ENCODE measurements at regions of chr14 and their contacts with region 1.

Region 1: GRCh38 chr14:39266871-39267591 is 33.3 kb downstream of the MIA2 start:
- DNase-seq: peak; percentile 86
- H3K4me3 ChIP-seq: peak overlapping the region; percentile 50 to 92 (median 84)
- H3K27ac ChIP-seq: peak overlapping the region; percentile 92
- H3K4me1 ChIP-seq: peaks cover 18% of the 10 kb centered on the region
- H3K27me3 ChIP-seq: no peaks in the 10 kb centered on the region
- CTCF ChIP-seq: no peak
- POLR2A ChIP-seq: peak; percentile 71

Region 2: GRCh38 chr14:39114073-39114838 is 152.8 kb before region 1 on chr14 and contains the start of gene GEMIN2:
- CTCF ChIA-PET with region 1: interaction called, 3 read pairs
- POLR2A ChIA-PET with region 1: no interaction called
- dilution Hi-C with region 1: no loop called
- intact Hi-C with region 1: loop called (anchors 5 kb)
- DNase-seq: peak; percentile 97
- H3K4me3 ChIP-seq: peak within 1 kb of the TSS; percentile 48 to 92 (median 61)
- H3K27ac ChIP-seq: peak within 1 kb of the TSS; percentile 7
- H3K4me1 ChIP-seq: peaks cover 11% of the 10 kb centered on the region
- H3K27me3 ChIP-seq: no peaks in the 10 kb centered on the region
- CTCF ChIP-seq: no peak
- POLR2A ChIP-seq: peak; percentile 83
- total RNA-seq, gene GEMIN2: 19.5 and 20.0 TPM in 2 replicates

Region 3: GRCh38 chr14:39138440-39138839 is 128.6 kb before region 1 on chr14:
- CTCF ChIA-PET with region 1: no interaction called
- POLR2A ChIA-PET with region 1: no interaction called
- dilution Hi-C with region 1: no loop called
- intact Hi-C with region 1: no loop called
- DNase-seq: no peak
- H3K4me3 ChIP-seq: no peak overlapping the region
- H3K27ac ChIP-seq: no peak overlapping the region
- H3K4me1 ChIP-seq: no peaks in the 10 kb centered on the region
- H3K27me3 ChIP-seq: no peaks in the 10 kb centered on the region
- CTCF ChIP-seq: no peak
- POLR2A ChIP-seq: no peak

Region 4: DNA sequence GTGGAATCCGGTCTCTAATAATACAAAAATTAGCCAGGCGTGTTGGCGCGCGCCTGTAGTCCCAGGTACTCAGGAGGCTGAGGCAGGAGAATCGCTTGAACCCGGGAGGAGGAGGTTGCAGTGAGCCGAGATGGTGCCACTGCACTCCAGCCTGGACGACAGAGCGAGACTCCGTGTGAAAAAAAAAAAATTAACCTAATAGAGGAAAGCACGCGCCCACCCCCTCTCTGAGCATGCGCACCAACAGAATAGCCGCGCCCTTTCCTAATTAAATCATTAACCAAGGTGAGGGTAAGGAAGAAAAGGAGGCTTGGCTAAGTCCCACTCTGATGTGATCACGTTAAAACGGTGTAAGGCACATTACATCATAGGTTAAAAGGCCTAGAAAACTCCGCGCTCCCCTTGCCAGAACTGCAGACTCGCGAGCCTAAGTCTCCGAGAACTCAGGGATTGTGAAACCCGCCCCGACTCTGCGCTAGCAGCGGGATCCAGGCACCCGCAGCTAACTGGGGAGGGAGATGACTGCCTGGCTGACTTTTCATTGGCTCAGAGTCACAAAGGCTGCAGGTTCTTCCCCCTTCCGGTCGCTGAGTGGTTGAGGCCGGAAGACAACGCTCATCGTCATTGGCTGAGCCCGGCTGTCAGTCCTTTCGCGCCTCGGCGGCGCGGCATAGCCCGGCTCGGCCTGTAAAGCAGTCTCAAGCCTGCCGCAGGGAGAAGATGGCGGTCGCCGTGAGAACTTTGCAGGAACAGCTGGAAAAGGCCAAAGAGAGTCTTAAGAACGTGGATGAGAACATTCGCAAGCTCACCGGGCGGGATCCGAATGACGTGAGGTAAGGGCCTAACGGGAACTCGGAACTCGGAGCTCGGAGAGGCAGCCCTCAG is 92.2 kb before region 1 on chr14 and contains the start of gene PNN:
- CTCF ChIA-PET with region 1: interaction called, 5 read pairs
- POLR2A ChIA-PET with region 1: interaction called, 8 read pairs
- dilution Hi-C with region 1: no loop called
- intact Hi-C with region 1: loop called (anchors 1 kb)
- DNase-seq: peak; percentile 100
- H3K4me3 ChIP-seq: peak within 1 kb of the TSS; percentile 69 to 92 (median 92)
- H3K27ac ChIP-seq: peak within 1 kb of the TSS; percentile 87
- H3K4me1 ChIP-seq: peaks cover 43% of the 10 kb centered on the region
- H3K27me3 ChIP-seq: no peaks in the 10 kb centered on the region
- CTCF ChIP-seq: no peak
- POLR2A ChIP-seq: peak; percentile 83
- total RNA-seq, gene PNN: 79.4 and 83.5 TPM in 2 replicates

Region 5: DNA sequence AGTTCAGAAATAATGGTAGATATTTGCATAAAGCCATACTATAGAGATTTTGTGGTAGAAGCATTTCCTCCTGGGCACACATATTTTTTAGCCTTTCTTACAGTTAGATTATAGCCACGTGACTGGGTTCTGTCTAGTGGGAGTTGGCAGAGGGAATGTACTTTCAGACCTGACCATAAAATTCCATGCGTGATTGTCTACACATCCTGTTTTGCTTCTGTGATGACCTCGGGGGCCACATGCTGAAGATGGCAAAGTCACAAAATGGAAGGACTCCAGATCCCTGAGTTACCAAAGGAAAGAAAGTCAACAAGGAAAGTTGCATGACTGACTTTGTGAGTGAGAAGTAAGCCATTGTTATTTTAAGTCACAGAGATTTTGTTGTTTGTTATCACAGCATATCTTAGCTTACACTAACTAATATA is 47.9 kb before region 1 on chr14:
- CTCF ChIA-PET with region 1: no interaction called
- POLR2A ChIA-PET with region 1: no interaction called
- dilution Hi-C with region 1: no loop called
- intact Hi-C with region 1: loop called (anchors 5 kb)
- DNase-seq: peak; percentile 89
- H3K4me3 ChIP-seq: no peak overlapping the region
- H3K27ac ChIP-seq: peak overlapping the region; percentile 61
- H3K4me1 ChIP-seq: peaks cover 23% of the 10 kb centered on the region
- H3K27me3 ChIP-seq: no peaks in the 10 kb centered on the region
- CTCF ChIP-seq: no peak
- POLR2A ChIP-seq: no peak

Region 6: GRCh38 chr14:39432179-39432618 is 165.2 kb after region 1 on chr14 and contains the start of gene FBXO33:
- CTCF ChIA-PET with region 1: no interaction called
- POLR2A ChIA-PET with region 1: no interaction called
- dilution Hi-C with region 1: no loop called
- intact Hi-C with region 1: loop called (anchors 2 kb)
- DNase-seq: peak; percentile 96
- H3K4me3 ChIP-seq: peak within 1 kb of the TSS; percentile 81 to 85 (median 84)
- H3K27ac ChIP-seq: peak within 1 kb of the TSS; percentile 99
- H3K4me1 ChIP-seq: peaks cover 27% of the 10 kb centered on the region
- H3K27me3 ChIP-seq: no peaks in the 10 kb centered on the region
- CTCF ChIP-seq: no peak
- POLR2A ChIP-seq: no peak
- total RNA-seq, gene FBXO33: 5.0 and 6.3 TPM in 2 replicates

Measured in endothelial cell of umbilical vein (primary cell).